AG04449 (cell line): ENCODE measurements at regions of chr19 and their contacts with region 1.

Region 1: GRCh38 chr19:44752816-44753618 is 4.5 kb downstream of the BCL3 start:
- DNase-seq: peak; percentile 89
- H3K4me3 ChIP-seq: peak overlapping the region; percentile 53
- CTCF ChIP-seq: peak; percentile 12

Region 2: DNA sequence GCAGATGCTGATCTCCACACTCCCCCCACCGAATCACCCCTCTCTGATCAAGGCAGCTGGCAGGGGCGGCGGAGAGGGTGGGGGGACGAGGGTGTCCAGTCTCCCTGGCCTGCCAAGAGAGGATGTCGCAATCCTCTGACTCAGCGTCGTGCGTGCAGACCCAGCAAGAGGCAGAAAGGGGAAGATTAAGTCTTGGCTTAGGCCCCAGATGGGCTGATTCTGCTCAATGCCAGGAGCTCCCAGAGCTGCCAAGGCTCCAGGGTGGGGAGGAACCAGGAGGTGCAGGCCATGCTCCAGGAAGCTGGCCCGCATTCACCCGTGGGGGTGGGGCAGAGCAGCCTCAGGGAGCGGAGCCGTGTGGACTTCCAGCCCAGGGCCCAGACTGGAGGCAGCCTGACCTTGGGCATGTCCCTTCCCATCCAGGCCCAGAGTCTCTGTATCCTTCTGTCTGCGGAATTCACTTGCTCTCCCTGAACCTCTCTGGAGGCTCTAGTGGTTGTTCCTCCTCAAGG is 11.1 kb before region 1 on chr19:
- CTCF ChIA-PET with region 1: interaction called, 4 read pairs
- POLR2A ChIA-PET with region 1: interaction called, 14 read pairs
- DNase-seq: peak; percentile 98
- H3K4me3 ChIP-seq: no peak overlapping the region
- CTCF ChIP-seq: no peak